Sigmoid colon (tissue), 7 donors: ENCODE measurements at regions of chr2 and their contacts with region 1.

Region 1: GRCh38 chr2:225889446-225889850 is 489.9 kb downstream of the NYAP2 start:
- DNase-seq: no peak
- H3K4me3 ChIP-seq: no peak overlapping the region
- H3K27ac ChIP-seq: no peak overlapping the region
- H3K4me1 ChIP-seq: peaks cover 0 to 11% (median under 1%) of the 10 kb centered on the region in 4 donors
- H3K27me3 ChIP-seq: no peaks in the 10 kb centered on the region
- CTCF ChIP-seq: peak; percentile 34 to 86 (median 74)
- EP300 ChIP-seq: no peak
- POLR2A ChIP-seq: no peak

Region 2: GRCh38 chr2:225002039-225002655 is 887.3 kb before region 1 on chr2:
- intact Hi-C with region 1: no loop called
- DNase-seq: no peak
- H3K4me3 ChIP-seq: no peak overlapping the region
- H3K27ac ChIP-seq: no peak overlapping the region
- H3K4me1 ChIP-seq: no peaks in the 10 kb centered on the region
- H3K27me3 ChIP-seq: no peaks in the 10 kb centered on the region
- CTCF ChIP-seq: peak in 2 of 4 experiments; percentile 27 to 33
- EP300 ChIP-seq: no peak
- POLR2A ChIP-seq: no peak

Region 3: GRCh38 chr2:226984750-226985582 is 1095.5 kb after region 1 on chr2:
- intact Hi-C with region 1: loop called (anchors 2 kb)
- DNase-seq: no peak
- H3K4me3 ChIP-seq: no peak overlapping the region
- H3K27ac ChIP-seq: peak overlapping the region in 1 of 4 donors; percentile 52
- H3K4me1 ChIP-seq: peaks cover 0 to 11% (median 4%) of the 10 kb centered on the region in 4 donors
- H3K27me3 ChIP-seq: no peaks in the 10 kb centered on the region
- CTCF ChIP-seq: peak; percentile 46 to 78 (median 65)
- EP300 ChIP-seq: no peak
- POLR2A ChIP-seq: no peak